KBM-7 (cell line): ENCODE measurements at regions of chr2 and their contacts with region 1.

Region 1: GRCh38 chr2:85826990-85827878 is 61.6 kb downstream of the ST3GAL5 start:
- DNase-seq: peak; percentile 81

Region 2: GRCh38 chr2:86054535-86055082 is 227.4 kb after region 1 on chr2:
- in situ Hi-C with region 1: no loop called
- DNase-seq: no peak

Region 3: GRCh38 chr2:86079981-86080911 is 253.0 kb after region 1 on chr2:
- in situ Hi-C with region 1: loop called (anchors 10 kb)
- DNase-seq: peak; percentile 81

Region 4: GRCh38 chr2:86480105-86480504 is 652.9 kb after region 1 on chr2:
- in situ Hi-C with region 1: no loop called
- DNase-seq: no peak